ENCODE measurements at regions of chr7 and their contacts with region 1.

Region 1: DNA sequence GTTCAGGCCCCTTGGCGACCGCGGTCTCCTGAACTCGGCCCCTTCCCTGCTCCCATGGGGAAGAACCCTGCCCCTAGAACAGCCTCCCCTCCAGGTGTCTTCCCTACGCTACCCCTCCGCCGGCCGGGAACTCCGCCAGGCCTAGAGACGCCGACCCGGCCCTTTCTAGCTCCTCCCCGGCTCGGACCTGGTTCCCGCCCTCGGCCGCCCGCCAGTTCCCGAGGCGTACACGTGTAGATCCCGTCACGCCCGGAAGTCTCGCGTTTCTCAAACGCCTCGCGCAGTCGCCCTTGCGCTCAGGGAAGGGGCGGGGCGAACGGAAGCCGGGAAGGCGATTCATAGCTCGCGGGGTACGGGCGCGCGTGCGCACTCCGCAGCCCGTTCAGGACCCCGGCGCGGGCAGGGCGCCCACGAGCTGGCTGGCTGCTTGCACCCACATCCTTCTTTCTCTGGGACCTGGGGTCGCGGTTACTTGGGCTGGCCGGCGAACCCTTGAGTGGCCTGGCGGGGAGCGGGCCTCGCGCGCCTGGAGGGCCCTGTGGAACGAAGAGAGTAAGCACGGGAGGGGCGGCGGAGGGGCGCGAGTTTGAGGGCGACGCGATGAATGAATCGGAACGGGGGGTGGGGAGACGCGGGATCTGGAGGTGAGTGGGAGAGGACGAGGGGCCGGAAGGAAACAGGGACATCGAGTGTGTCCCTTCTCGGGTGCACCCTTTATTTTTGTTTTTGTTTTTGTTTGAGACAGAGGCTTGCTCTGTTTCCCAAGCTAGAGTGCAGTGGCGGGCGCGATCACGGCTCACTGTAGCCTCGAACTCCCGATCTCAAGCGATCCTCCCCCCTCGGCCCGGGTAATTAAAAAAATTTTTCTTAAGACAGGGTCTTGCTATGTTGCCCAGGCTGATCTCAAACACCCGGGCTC is at the start of gene POP7:
- DNase-seq: peak; percentile 99
- H3K4me3 Mint-ChIP-seq: peak within 1 kb of the TSS; percentile 94
- H3K27ac Mint-ChIP-seq: peak within 1 kb of the TSS; percentile 90
- H3K4me1 Mint-ChIP-seq: peaks cover 17% of the 10 kb centered on the region
- H3K27me3 Mint-ChIP-seq: peaks cover 2% of the 10 kb centered on the region
- total RNA-seq, gene POP7: 32.5 to 35.2 TPM

Region 2: GRCh38 chr7:100428199-100428966 is 277.6 kb before region 1 on chr7 and contains the start of gene ZCWPW1:
- CTCF ChIA-PET with region 1: interaction called, 9 read pairs
- POLR2A ChIA-PET with region 1: interaction called, 11 read pairs
- DNase-seq: peak; percentile 96
- H3K4me3 Mint-ChIP-seq: peak within 1 kb of the TSS; percentile 92
- H3K27ac Mint-ChIP-seq: peak within 1 kb of the TSS; percentile 100
- H3K4me1 Mint-ChIP-seq: peaks cover 46% of the 10 kb centered on the region
- H3K27me3 Mint-ChIP-seq: peaks cover 3% of the 10 kb centered on the region
- total RNA-seq, gene ZCWPW1: 2.7 to 3.0 TPM

Region 3: DNA sequence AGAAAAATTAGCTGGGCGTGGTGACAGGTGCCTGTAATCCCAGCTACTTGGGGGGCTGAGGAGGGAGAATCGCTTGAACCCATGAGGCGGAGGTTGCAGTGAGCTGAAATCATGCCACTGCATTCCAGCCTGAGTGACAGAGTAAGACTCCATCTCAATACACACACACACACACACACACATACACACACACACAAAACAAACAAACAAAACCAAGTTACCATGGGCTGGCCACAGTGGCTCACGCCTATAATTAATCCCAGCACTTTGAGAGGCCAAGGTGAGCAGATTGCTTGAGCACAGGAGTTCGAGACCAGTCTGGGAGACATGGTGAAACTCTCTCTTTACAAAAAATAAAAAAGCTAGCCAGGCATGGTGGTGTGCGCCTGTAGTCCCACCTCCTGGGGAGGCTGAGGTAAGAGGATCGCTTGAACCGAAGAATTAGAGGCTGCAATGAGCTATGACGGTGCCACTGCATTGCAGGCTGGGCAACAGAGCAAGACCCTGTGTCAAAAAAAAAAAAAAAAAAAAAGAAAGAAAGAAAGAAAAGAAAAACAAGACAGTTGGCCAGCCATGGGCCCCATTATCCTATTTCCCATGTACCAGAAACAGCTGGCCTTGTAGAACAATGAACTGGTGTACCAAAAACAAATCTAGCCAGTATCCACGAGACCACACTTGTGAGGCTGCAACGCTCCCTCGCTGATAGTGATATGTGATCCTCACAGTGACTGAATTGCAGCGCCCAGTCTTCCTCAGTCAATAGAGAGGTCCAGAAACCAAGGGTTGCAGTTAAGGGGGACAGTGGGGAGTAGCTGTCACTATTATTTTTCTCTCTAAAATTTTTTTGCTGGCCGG is 173.6 kb before region 1 on chr7:
- CTCF ChIA-PET with region 1: no interaction called
- POLR2A ChIA-PET with region 1: no interaction called
- DNase-seq: no peak
- H3K4me3 Mint-ChIP-seq: no peak overlapping the region
- H3K27ac Mint-ChIP-seq: no peak overlapping the region
- H3K4me1 Mint-ChIP-seq: peaks cover 8% of the 10 kb centered on the region
- H3K27me3 Mint-ChIP-seq: no peaks in the 10 kb centered on the region

Region 4: GRCh38 chr7:100626530-100627237 is 79.3 kb before region 1 on chr7:
- CTCF ChIA-PET with region 1: interaction called, 10 read pairs
- POLR2A ChIA-PET with region 1: interaction called, 8 read pairs
- DNase-seq: peak; percentile 94
- H3K4me3 Mint-ChIP-seq: peak overlapping the region; percentile 76
- H3K27ac Mint-ChIP-seq: peak overlapping the region; percentile 86
- H3K4me1 Mint-ChIP-seq: peaks cover 74% of the 10 kb centered on the region
- H3K27me3 Mint-ChIP-seq: no peaks in the 10 kb centered on the region

Region 5: GRCh38 chr7:100673300-100673941 is 32.6 kb before region 1 on chr7 and contains the start of gene GNB2:
- CTCF ChIA-PET with region 1: interaction called, 13 read pairs
- POLR2A ChIA-PET with region 1: interaction called, 17 read pairs
- DNase-seq: peak; percentile 99
- H3K4me3 Mint-ChIP-seq: peak within 1 kb of the TSS; percentile 98
- H3K27ac Mint-ChIP-seq: peak within 1 kb of the TSS; percentile 93
- H3K4me1 Mint-ChIP-seq: peaks cover 21% of the 10 kb centered on the region
- H3K27me3 Mint-ChIP-seq: peaks cover 10% of the 10 kb centered on the region
- total RNA-seq, gene GNB2: 263 to 266 TPM

Region 6: GRCh38 chr7:100691676-100692577 is 14.1 kb before region 1 on chr7:
- CTCF ChIA-PET with region 1: interaction called, 90 read pairs
- POLR2A ChIA-PET with region 1: interaction called, 27 read pairs
- DNase-seq: peak; percentile 84
- H3K4me3 Mint-ChIP-seq: peak overlapping the region; percentile 96
- H3K27ac Mint-ChIP-seq: peak overlapping the region; percentile 42
- H3K4me1 Mint-ChIP-seq: peaks cover 37% of the 10 kb centered on the region
- H3K27me3 Mint-ChIP-seq: peaks cover 10% of the 10 kb centered on the region

Region 7: DNA sequence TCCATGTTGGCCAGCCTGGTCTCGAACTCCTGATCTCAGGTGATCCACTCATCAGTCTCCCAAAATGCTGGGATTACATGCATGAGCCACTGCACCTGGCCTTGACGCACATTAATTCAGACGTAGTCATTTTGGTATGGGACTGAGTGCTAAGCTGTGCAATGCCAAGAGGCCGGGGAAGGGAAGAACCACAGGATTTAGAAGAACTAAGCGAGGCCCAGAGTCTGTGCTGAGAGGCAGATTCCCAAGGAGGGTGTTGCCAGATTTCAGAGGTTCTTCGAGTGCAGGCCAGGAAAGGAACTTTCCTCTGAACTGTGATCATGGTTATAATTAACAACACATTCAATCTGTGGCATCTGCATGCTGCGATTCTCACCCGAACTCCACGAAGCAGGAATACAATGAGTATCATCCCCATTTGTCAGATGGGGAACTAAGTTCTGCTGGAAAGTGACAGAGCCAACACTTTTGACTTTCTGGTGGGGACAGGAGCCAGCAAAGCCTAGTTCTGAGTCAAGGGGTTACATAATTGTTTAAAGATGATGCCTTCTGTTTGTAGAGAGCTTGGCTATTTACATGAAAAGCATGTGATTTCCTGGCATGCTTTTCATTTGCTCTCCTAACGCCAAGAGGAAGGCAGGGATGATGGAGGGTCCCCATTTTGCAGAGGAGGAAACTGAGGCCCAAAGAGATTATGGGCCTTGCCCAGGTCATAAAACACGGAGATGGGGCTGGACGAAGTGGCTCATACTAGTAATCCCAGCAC is 21.2 kb after region 1 on chr7:
- CTCF ChIA-PET with region 1: interaction called, 49 read pairs
- POLR2A ChIA-PET with region 1: interaction called, 10 read pairs
- DNase-seq: no peak
- H3K4me3 Mint-ChIP-seq: no peak overlapping the region
- H3K27ac Mint-ChIP-seq: no peak overlapping the region
- H3K4me1 Mint-ChIP-seq: peaks cover 4% of the 10 kb centered on the region
- H3K27me3 Mint-ChIP-seq: peaks cover 23% of the 10 kb centered on the region

Region 8: GRCh38 chr7:100874577-100875355 is 168.8 kb after region 1 on chr7 and contains the start of gene SRRT:
- CTCF ChIA-PET with region 1: interaction called, 10 read pairs
- POLR2A ChIA-PET with region 1: interaction called, 18 read pairs
- DNase-seq: peak; percentile 99
- H3K4me3 Mint-ChIP-seq: peak within 1 kb of the TSS; percentile 98
- H3K27ac Mint-ChIP-seq: peak within 1 kb of the TSS; percentile 97
- H3K4me1 Mint-ChIP-seq: peaks cover 60% of the 10 kb centered on the region
- H3K27me3 Mint-ChIP-seq: no peaks in the 10 kb centered on the region
- total RNA-seq, gene SRRT: 202 to 205 TPM

Measured in activated CD4-positive, alpha-beta memory T cell treated with anti-CD3 and anti-CD28 coated beads, Interleukin-2, amount 10 ng/mL, durations not matched to agents 7 days and 5 days (primary cell).